Activated naive CD4-positive, alpha-beta T cell treated with anti-CD3 and anti-CD28 coated beads for 36 hours (primary cell): ENCODE measurements at regions of chr7 and their contacts with region 1.

Region 1: GRCh38 chr7:45863715-45864114 is 9.2 kb downstream of the CCDC201 start:
- DNase-seq: no peak
- H3K4me3 Mint-ChIP-seq: no peak overlapping the region
- H3K27ac Mint-ChIP-seq: no peak overlapping the region
- H3K4me1 Mint-ChIP-seq: no peaks in the 10 kb centered on the region
- H3K27me3 Mint-ChIP-seq: peaks cover 23% of the 10 kb centered on the region

Region 2: DNA sequence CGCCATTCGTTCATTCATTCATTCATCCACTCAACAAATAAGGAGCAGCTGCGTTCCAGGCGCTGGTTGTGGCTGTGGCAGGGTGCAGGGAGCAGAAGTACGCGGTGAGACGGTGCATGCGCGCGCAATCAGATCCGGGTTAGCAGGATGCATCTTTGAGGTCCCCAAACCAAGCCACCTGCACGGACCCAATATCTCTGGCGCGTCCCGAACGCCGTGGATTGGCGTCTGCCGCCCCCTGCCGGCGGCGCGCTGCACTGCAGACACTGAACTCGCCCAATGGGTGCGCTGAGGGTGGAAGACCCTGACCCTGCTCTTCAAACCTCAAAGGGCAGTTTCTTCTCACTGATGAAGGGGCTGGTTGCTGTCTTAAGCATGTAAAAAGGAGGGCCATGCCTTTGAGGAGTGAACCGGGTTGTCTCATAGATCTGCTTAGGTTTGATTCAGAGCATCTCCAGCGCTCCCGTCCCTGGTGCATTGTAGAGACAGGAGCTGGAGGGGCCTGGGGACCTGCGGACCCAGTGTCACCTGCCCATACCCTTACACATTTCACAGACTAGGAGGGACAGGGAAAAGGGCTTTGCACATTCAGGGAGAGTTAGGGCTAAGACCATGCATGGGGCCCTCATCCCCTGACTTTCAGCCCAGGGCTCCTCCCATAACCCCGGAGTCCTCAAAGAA is 603.6 kb before region 1 on chr7:
- CTCF ChIA-PET with region 1: no interaction called
- intact Hi-C with region 1: loop called (anchors 10 kb)
- DNase-seq: peak; percentile 75
- H3K4me3 Mint-ChIP-seq: no peak overlapping the region
- H3K27ac Mint-ChIP-seq: no peak overlapping the region
- H3K4me1 Mint-ChIP-seq: no peaks in the 10 kb centered on the region
- H3K27me3 Mint-ChIP-seq: peaks cover 10% of the 10 kb centered on the region

Region 3: GRCh38 chr7:45599851-45600706 is 263.6 kb before region 1 on chr7:
- CTCF ChIA-PET with region 1: no interaction called
- intact Hi-C with region 1: loop called (anchors 10 kb)
- DNase-seq: no peak
- H3K4me3 Mint-ChIP-seq: no peak overlapping the region
- H3K27ac Mint-ChIP-seq: no peak overlapping the region
- H3K4me1 Mint-ChIP-seq: no peaks in the 10 kb centered on the region
- H3K27me3 Mint-ChIP-seq: peaks cover 2% of the 10 kb centered on the region

Region 4: DNA sequence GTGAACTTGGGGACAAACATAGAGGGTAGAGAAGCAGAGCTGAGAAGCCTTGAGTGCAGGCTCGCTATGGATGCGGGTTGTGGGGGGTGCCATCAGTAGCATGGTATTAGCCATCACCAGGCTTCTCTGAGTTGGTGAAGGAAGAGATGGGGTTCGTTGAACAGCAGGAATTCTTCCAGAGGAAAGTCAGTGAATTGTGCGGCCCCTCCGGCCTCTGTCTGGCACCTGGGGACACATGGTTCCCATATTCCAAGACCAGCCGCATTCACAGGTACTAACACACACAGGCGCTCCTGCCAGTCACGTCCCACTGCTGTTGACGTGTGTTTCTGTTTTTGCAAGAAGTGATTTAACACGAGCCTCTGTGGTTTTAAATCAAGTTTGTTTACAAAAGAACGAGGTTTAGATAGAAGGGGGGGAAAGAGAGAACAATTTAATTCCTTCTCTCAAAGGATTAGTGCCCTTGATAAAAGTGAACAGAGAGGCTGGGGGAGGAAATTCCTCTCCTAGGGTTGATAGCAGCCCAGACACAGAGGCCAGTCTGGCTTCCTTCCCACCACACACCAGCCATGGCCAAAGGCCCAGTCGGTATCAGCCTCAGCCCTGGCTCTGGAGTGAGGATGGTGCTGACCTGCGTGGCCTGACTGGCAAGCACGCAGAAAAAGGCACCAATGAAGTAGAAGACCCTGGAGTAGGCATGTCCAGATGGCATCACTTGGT is 309.9 kb after region 1 on chr7:
- CTCF ChIA-PET with region 1: no interaction called
- intact Hi-C with region 1: no loop called
- DNase-seq: no peak
- H3K4me3 Mint-ChIP-seq: no peak overlapping the region
- H3K27ac Mint-ChIP-seq: no peak overlapping the region
- H3K4me1 Mint-ChIP-seq: no peaks in the 10 kb centered on the region
- H3K27me3 Mint-ChIP-seq: no peaks in the 10 kb centered on the region